Prostate gland (tissue), 2 donors: ENCODE measurements at regions of chr17 and their contacts with region 1.

Region 1: DNA sequence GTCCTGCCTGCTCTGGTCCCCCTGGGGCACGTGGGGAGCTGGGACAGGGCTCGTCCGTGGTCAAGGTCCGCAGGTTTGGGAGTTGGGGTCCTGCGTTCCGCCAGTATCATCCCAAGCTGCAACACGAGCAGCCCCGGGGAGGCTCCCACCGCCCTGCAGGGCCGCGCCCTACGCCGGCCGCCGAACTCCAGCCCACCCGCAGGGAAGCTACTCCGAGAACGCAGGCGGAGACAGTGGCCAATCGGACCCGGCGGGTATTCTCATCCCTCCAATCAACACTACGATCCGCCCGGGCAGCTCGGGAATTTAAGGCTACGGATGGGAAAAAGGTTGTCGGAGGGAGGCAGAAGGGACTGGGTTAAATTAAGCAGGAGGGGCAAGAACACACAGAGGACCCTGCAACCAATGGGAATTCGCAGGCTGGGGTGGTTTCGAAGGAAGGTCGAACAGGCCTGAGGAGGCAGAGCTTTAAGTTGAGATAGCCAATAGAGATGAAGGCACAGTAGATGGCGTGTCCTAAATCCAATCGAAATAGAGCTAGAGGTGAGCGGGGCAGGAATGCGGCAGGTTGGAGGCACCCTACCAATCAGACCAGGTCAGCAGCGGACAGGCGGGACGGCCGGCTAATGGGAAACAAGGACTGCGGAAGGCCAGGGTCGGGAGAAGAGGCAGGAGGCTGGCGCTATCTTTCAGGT is 626 bp downstream of the SPAG7 start:
- DNase-seq: peak; percentile 100
- H3K4me3 ChIP-seq: peak overlapping the region; percentile 48 to 63
- H3K27ac ChIP-seq: peak overlapping the region; percentile 94 to 96
- H3K4me1 ChIP-seq: peaks cover 12% of the 10 kb centered on the region
- H3K27me3 ChIP-seq: no peaks in the 10 kb centered on the region
- CTCF ChIP-seq: peak in 1 of 4 experiments; percentile 14
- POLR2A ChIP-seq: peak; percentile 42

Region 2: GRCh38 chr17:4997302-4998026 is 30.5 kb after region 1 on chr17 and contains the starts of genes INCA1 and KIF1C:
- intact Hi-C with region 1: loop called (anchors 2 kb)
- DNase-seq: peak; percentile 93
- H3K4me3 ChIP-seq: peak within 1 kb of the TSS; percentile 92 to 98
- H3K27ac ChIP-seq: peak within 1 kb of the TSS; percentile 93 to 94
- H3K4me1 ChIP-seq: peaks cover 8% of the 10 kb centered on the region
- H3K27me3 ChIP-seq: no peaks in the 10 kb centered on the region
- CTCF ChIP-seq: peak in 2 of 4 experiments; percentile 51 to 70
- POLR2A ChIP-seq: peak; percentile 89
- total RNA-seq, gene INCA1: 2.5 to 8.4 TPM
- total RNA-seq, gene KIF1C: 59.5 to 88.9 TPM

Region 3: GRCh38 chr17:5011928-5012327 is 44.9 kb after region 1 on chr17:
- intact Hi-C with region 1: no loop called
- DNase-seq: no peak
- H3K4me3 ChIP-seq: no peak overlapping the region
- H3K27ac ChIP-seq: no peak overlapping the region
- H3K4me1 ChIP-seq: no peaks in the 10 kb centered on the region
- H3K27me3 ChIP-seq: no peaks in the 10 kb centered on the region
- CTCF ChIP-seq: no peak
- POLR2A ChIP-seq: no peak

Region 4: DNA sequence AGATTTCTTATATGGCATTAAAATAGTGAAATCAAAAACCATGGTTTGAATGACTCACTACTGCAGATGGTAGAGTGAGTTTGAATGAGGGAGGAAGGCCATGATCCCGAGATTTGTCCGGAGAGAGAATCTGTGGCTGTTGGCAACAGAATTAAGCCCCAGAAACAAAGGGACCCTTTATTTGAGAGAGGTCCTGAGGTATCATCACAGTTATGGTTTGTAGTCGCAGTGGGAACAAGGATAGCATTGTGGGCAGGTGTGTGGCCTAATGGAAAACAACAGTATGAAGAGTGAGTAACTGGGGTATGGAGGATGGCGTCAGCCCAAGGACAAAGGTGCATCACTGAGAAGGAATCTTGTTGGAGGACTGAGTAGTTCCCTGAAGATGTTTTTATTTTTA is 102.7 kb after region 1 on chr17:
- intact Hi-C with region 1: no loop called
- DNase-seq: no peak
- H3K4me3 ChIP-seq: no peak overlapping the region
- H3K27ac ChIP-seq: no peak overlapping the region
- H3K4me1 ChIP-seq: no peaks in the 10 kb centered on the region
- H3K27me3 ChIP-seq: no peaks in the 10 kb centered on the region
- CTCF ChIP-seq: no peak
- POLR2A ChIP-seq: no peak